ENCODE measurements at regions of chr10 and their contacts with region 1.

Region 1: DNA sequence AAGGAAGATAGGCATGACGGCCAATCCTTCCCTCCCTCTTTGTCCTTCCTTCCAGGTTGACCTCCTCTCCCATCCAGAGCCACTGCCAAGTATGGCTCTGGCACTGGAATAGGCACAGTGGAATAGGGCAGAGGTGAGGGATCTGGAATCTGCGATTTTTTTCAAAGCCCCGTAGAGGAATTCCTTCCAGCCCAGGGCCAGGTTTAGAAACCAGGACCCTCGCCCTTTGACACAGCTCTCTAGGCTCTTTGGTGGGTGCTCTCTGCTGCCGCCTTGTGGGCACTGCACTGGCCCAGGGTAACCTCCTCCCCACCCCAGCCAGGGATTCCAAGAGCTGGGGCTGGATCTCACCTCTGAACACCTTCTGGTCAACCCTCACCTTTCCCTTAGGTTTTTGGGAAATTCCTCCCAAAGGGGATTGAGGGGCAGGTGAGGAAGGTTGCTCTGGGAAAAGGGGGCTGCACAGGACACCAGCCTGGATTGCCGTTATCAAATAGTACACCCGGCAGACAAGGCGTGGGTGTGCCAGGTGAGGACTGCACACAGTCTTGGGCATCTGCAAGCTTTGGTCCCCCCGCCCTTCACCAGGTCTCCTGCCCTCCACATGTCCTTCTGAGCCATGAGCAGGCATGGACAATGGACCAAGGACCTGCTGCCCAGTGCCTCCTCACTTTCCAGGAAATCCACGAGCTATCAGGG is 22.8 kb downstream of the C10orf105 start:
- DNase-seq: peak; percentile 43 to 81 (median 70)
- ATAC-seq: peak; percentile 61
- H3K4me3 ChIP-seq: no peak overlapping the region
- H3K4me3 Mint-ChIP-seq: no peak overlapping the region
- H3K27ac ChIP-seq: no peak overlapping the region
- H3K27ac Mint-ChIP-seq: no peak overlapping the region
- H3K4me1 ChIP-seq: peaks cover 49% of the 10 kb centered on the region
- H3K4me1 Mint-ChIP-seq: peaks cover 49% of the 10 kb centered on the region
- H3K27me3 ChIP-seq: no peaks in the 10 kb centered on the region
- H3K27me3 Mint-ChIP-seq: no peaks in the 10 kb centered on the region
- CTCF ChIP-seq: peak; percentile 71

Region 2: GRCh38 chr10:70918851-70919530 is 777.8 kb before region 1 on chr10:
- CTCF ChIA-PET with region 1: no interaction called
- POLR2A ChIA-PET with region 1: no interaction called
- intact Hi-C with region 1: loop called in 1 of 2 experiments (anchors 5 kb)
- DNase-seq: no peak
- ATAC-seq: no peak
- H3K4me3 ChIP-seq: no peak overlapping the region
- H3K4me3 Mint-ChIP-seq: no peak overlapping the region
- H3K27ac ChIP-seq: no peak overlapping the region
- H3K27ac Mint-ChIP-seq: no peak overlapping the region
- H3K4me1 ChIP-seq: no peaks in the 10 kb centered on the region
- H3K4me1 Mint-ChIP-seq: no peaks in the 10 kb centered on the region
- H3K27me3 ChIP-seq: no peaks in the 10 kb centered on the region
- H3K27me3 Mint-ChIP-seq: peaks cover 10% of the 10 kb centered on the region
- CTCF ChIP-seq: no peak

Region 3: GRCh38 chr10:71319042-71319799 is 377.6 kb before region 1 on chr10 and contains the start of gene SLC29A3:
- CTCF ChIA-PET with region 1: interaction called, 18 read pairs
- POLR2A ChIA-PET with region 1: no interaction called
- intact Hi-C with region 1: loop called in 1 of 2 experiments (anchors 1 kb)
- DNase-seq: peak; percentile 69 to 92 (median 80)
- ATAC-seq: peak; percentile 87
- H3K4me3 ChIP-seq: peak within 1 kb of the TSS; percentile 83 to 91
- H3K4me3 Mint-ChIP-seq: peak within 1 kb of the TSS; percentile 92
- H3K27ac ChIP-seq: peak within 1 kb of the TSS; percentile 58 to 61
- H3K27ac Mint-ChIP-seq: peak within 1 kb of the TSS; percentile 80
- H3K4me1 ChIP-seq: peaks cover 18% of the 10 kb centered on the region
- H3K4me1 Mint-ChIP-seq: peaks cover 45% of the 10 kb centered on the region
- H3K27me3 ChIP-seq: no peaks in the 10 kb centered on the region
- H3K27me3 Mint-ChIP-seq: no peaks in the 10 kb centered on the region
- CTCF ChIP-seq: peak; percentile 38
- total RNA-seq, gene SLC29A3: 1.4 to 2.9 TPM

Region 4: GRCh38 chr10:71685554-71686232 is 11.1 kb before region 1 on chr10:
- CTCF ChIA-PET with region 1: interaction called, 238 read pairs
- POLR2A ChIA-PET with region 1: no interaction called
- intact Hi-C with region 1: no loop called
- DNase-seq: no peak
- ATAC-seq: no peak
- H3K4me3 ChIP-seq: no peak overlapping the region
- H3K4me3 Mint-ChIP-seq: no peak overlapping the region
- H3K27ac ChIP-seq: no peak overlapping the region
- H3K27ac Mint-ChIP-seq: no peak overlapping the region
- H3K4me1 ChIP-seq: peaks cover 3% of the 10 kb centered on the region
- H3K4me1 Mint-ChIP-seq: no peaks in the 10 kb centered on the region
- H3K27me3 ChIP-seq: no peaks in the 10 kb centered on the region
- H3K27me3 Mint-ChIP-seq: no peaks in the 10 kb centered on the region
- CTCF ChIP-seq: no peak

Region 5: GRCh38 chr10:71740069-71740468 is 43.3 kb after region 1 on chr10:
- CTCF ChIA-PET with region 1: interaction called, 14 read pairs
- POLR2A ChIA-PET with region 1: interaction called, 5 read pairs
- intact Hi-C with region 1: loop called in 1 of 2 experiments (anchors 5 kb)
- DNase-seq: no peak
- ATAC-seq: no peak
- H3K4me3 ChIP-seq: peak overlapping the region in 1 of 2 experiments; percentile 45
- H3K4me3 Mint-ChIP-seq: peak overlapping the region; percentile 41
- H3K27ac ChIP-seq: peak overlapping the region in 1 of 2 experiments; percentile 38
- H3K27ac Mint-ChIP-seq: peak overlapping the region; percentile 93
- H3K4me1 ChIP-seq: peaks cover 100% of the 10 kb centered on the region
- H3K4me1 Mint-ChIP-seq: peaks cover 99% of the 10 kb centered on the region
- H3K27me3 ChIP-seq: no peaks in the 10 kb centered on the region
- H3K27me3 Mint-ChIP-seq: no peaks in the 10 kb centered on the region
- CTCF ChIP-seq: no peak

Region 6: DNA sequence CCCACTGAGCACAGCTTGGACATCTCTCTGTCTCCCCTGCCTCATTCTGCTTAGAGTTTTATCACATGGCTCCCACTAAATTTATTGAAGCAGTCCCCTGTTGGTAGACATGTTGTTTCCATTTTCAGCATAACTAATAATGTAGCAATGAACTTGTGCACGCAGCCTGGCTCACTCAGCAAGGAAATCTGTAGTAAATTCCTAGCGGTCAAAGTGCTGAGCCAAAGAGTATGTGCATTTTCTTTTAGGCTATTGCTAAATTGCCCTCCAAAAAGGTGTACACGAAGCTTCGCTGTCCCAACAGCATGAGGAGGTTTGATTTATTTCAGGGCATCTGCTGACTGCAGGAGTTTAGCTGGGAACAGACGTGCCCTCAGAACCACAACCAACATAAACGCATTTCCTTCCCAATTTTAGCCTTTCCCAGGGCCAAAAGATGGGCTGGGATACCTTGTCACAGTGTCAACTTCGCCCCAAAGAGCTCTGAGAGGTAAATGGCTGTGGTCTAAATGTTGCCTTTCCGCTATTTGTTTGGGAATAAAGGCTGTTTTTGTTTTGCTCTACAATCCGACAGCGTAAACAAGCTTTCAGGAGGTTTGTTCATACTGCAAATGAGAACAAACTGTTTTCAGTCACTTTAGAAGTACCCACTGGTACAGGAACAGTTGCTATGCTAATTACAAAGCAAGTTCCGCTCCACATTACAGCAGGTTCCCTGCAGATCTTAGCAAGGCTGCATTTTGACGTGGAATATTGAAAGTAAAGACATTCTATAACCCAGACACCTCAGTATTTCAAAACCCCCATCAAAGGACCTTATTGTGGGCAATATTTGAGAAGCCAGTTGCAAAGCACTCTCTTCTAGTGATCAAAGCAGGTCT is 59.8 kb after region 1 on chr10:
- CTCF ChIA-PET with region 1: interaction called, 242 read pairs
- POLR2A ChIA-PET with region 1: interaction called, 3 read pairs
- intact Hi-C with region 1: no loop called
- DNase-seq: peak in 3 of 9 experiments; percentile 29 to 81 (median 61)
- ATAC-seq: peak; percentile 69
- H3K4me3 ChIP-seq: peak overlapping the region; percentile 7 to 38
- H3K4me3 Mint-ChIP-seq: peak overlapping the region; percentile 75
- H3K27ac ChIP-seq: peak overlapping the region; percentile 48 to 73
- H3K27ac Mint-ChIP-seq: peak overlapping the region; percentile 95
- H3K4me1 ChIP-seq: peaks cover 93% of the 10 kb centered on the region
- H3K4me1 Mint-ChIP-seq: peaks cover 91% of the 10 kb centered on the region
- H3K27me3 ChIP-seq: no peaks in the 10 kb centered on the region
- H3K27me3 Mint-ChIP-seq: no peaks in the 10 kb centered on the region
- CTCF ChIP-seq: no peak

Region 7: DNA sequence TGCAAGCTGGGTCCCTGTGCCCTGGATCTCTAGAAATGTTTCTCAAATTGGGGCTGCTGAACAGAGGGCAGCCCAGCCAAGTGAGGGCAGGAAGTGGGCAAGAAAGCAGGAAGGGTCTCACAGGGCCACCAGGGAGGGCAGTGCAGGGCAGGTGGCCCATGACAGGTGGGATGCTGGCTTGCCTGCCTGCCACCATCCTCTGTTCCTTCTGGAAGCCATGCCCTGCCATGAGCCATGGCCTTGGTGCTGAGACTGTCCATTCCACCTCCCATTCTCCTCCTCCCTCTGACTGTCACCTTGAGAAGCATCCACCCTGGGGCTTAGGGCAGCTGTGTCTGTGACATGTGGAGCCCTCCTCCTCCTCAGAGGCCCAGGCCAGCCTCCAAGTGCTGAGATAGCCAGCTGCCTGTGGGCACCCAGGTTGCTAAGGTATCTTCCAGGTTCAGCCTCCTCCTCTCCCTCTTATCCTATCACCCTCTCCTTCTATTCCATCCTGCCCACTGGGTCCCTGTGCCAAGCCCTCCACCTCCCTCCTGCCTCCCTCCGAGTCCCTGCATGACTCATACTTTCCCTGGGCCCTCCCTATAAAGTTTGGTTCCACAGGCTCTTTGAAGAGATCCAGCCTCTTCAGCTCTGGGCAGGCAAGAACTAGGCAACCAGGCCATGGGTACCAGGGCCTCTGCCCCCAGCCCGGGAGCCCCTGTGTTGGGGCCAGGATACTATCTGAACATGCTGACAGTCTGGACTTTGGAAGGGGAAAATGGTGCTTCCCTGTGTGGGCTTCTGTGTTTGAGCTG is 75.2 kb after region 1 on chr10:
- CTCF ChIA-PET with region 1: interaction called, 242 read pairs
- POLR2A ChIA-PET with region 1: interaction called, 17 read pairs
- intact Hi-C with region 1: loop called (anchors 1 kb)
- DNase-seq: peak in 2 of 9 experiments; percentile 30 to 50
- ATAC-seq: no peak
- H3K4me3 ChIP-seq: peak overlapping the region; percentile 88 to 100
- H3K4me3 Mint-ChIP-seq: peak overlapping the region; percentile 95
- H3K27ac ChIP-seq: peak overlapping the region; percentile 80 to 89
- H3K27ac Mint-ChIP-seq: peak overlapping the region; percentile 92
- H3K4me1 ChIP-seq: peaks cover 73% of the 10 kb centered on the region
- H3K4me1 Mint-ChIP-seq: peaks cover 81% of the 10 kb centered on the region
- H3K27me3 ChIP-seq: no peaks in the 10 kb centered on the region
- H3K27me3 Mint-ChIP-seq: no peaks in the 10 kb centered on the region
- CTCF ChIP-seq: no peak